Heart left ventricle (tissue), 16 donors: ENCODE measurements at regions of chr9 and their contacts with region 1.

Region 1: DNA sequence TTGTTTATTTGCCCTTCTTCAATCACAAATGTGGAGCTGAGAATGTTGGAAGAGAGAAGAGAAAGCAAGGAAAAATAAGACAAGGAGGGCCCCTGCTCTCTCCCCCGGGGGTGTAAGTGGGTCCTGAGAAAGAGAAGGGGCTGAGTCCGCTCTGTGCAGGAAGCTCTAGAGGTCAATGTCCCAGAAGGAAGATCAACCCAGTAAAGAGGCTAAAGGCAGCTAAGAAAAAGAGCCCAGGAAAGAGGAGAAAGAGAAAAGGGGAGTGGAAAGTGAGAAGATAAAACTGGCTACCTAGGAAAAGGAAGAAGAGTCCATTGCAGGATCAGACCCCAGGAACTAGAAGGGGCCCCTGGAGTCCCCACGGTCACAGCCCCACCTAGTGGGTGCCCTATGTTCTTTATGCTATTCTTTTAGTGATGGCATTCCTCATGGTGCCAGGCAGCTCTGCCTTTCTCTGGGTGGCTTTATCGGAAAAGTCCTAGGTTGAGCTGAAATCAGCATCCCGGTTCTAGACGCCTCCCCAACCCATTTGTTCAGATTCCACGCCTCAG is 583.4 kb downstream of the ACTL7B start:
- DNase-seq: peak; percentile 31 to 65 (median 53)
- ATAC-seq: peak; percentile 75 to 91 (median 84)
- H3K4me3 ChIP-seq: peak overlapping the region in 6 of 12 donors; percentile 6 to 42 (median 36)
- H3K27ac ChIP-seq: peak overlapping the region in 7 of 12 donors; percentile 23 to 72 (median 40)
- H3K4me1 ChIP-seq: peaks cover 0 to 20% (median 0%) of the 10 kb centered on the region in 12 donors
- H3K27me3 ChIP-seq: no peaks in the 10 kb centered on the region
- CTCF ChIP-seq: peak in 11 of 12 donors; percentile 55 to 75 (median 65)
- POLR2A ChIP-seq: no peak

Region 2: GRCh38 chr9:107465467-107466451 is 806.7 kb before region 1 on chr9:
- intact Hi-C with region 1: loop called in 3 of 10 experiments (anchors 5 kb)
- DNase-seq: peak; percentile 65 to 87 (median 72)
- ATAC-seq: peak; percentile 88 to 99 (median 98)
- H3K4me3 ChIP-seq: peak overlapping the region; percentile 38 to 83 (median 70)
- H3K27ac ChIP-seq: peak overlapping the region in 5 of 12 donors; percentile 51 to 69 (median 58)
- H3K4me1 ChIP-seq: peaks cover 0 to 15% (median 4%) of the 10 kb centered on the region in 12 donors
- H3K27me3 ChIP-seq: no peaks in the 10 kb centered on the region
- CTCF ChIP-seq: peak; percentile 84 to 97 (median 90)
- POLR2A ChIP-seq: no peak

Region 3: DNA sequence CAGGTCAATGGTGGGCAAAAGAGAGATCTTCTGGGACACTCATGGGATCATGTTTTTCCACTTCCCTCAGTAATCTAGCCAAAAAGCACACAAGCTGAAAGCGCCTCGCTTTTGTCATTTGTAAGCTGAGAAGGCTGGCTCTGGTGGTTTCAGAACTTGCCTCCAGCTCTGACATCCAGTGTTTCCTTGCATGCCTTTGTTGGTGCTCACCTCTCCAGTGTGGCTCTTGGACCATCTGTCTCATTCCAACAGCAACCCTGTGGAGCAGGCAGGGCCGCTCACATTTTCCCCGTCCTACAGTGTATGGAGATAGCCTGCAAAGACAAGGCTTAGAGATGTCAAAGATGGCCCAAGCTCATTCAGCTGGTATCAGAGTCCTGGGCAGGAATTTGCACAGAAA is 622.1 kb before region 1 on chr9:
- intact Hi-C with region 1: loop called in 1 of 10 experiments (anchors 10 kb)
- DNase-seq: no peak
- ATAC-seq: no peak
- H3K4me3 ChIP-seq: no peak overlapping the region
- H3K27ac ChIP-seq: no peak overlapping the region
- H3K4me1 ChIP-seq: peaks cover 0 to 21% (median 8%) of the 10 kb centered on the region in 12 donors
- H3K27me3 ChIP-seq: no peaks in the 10 kb centered on the region
- CTCF ChIP-seq: no peak
- POLR2A ChIP-seq: no peak

Region 4: DNA sequence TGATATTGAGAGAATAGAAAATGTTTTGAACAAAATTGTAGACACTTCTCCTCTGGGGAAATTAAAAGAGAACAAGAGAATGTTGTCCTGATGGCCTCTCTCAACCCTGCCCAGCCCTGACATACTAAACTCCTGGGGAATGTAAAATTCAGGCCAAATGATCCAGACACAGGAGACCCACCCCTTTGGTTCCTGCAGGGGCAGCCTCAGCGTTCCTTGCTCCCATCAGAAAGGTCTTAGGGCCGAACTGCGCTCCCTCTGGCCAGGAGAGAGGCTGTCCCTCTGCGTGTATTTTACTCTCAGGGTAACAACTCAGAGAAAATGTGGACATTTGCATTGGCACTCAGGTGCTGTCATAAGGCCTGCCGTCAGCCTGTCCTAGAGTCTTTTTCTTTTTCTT is 166.5 kb before region 1 on chr9:
- intact Hi-C with region 1: no loop called
- DNase-seq: no peak
- ATAC-seq: peak in 1 of 4 donors; percentile 64
- H3K4me3 ChIP-seq: no peak overlapping the region
- H3K27ac ChIP-seq: no peak overlapping the region
- H3K4me1 ChIP-seq: no peaks in the 10 kb centered on the region
- H3K27me3 ChIP-seq: no peaks in the 10 kb centered on the region
- CTCF ChIP-seq: no peak
- POLR2A ChIP-seq: no peak

Region 5: GRCh38 chr9:108142504-108143201 is 129.8 kb before region 1 on chr9:
- intact Hi-C with region 1: loop called in 3 of 10 experiments (anchors 5 to 10 kb)
- DNase-seq: peak; percentile 76 to 85 (median 80)
- ATAC-seq: peak; percentile 98 to 99 (median 98)
- H3K4me3 ChIP-seq: no peak overlapping the region
- H3K27ac ChIP-seq: peak overlapping the region; percentile 53 to 91 (median 80)
- H3K4me1 ChIP-seq: peaks cover 0 to 25% (median 16%) of the 10 kb centered on the region in 12 donors
- H3K27me3 ChIP-seq: no peaks in the 10 kb centered on the region
- CTCF ChIP-seq: no peak
- POLR2A ChIP-seq: peak in 1 of 2 donors; percentile 5

Region 6: GRCh38 chr9:108217431-108218349 is 54.7 kb before region 1 on chr9:
- intact Hi-C with region 1: no loop called
- DNase-seq: no peak
- ATAC-seq: no peak
- H3K4me3 ChIP-seq: no peak overlapping the region
- H3K27ac ChIP-seq: no peak overlapping the region
- H3K4me1 ChIP-seq: no peaks in the 10 kb centered on the region
- H3K27me3 ChIP-seq: no peaks in the 10 kb centered on the region
- CTCF ChIP-seq: no peak
- POLR2A ChIP-seq: no peak

Region 7: GRCh38 chr9:108535526-108535925 is 263.1 kb after region 1 on chr9:
- intact Hi-C with region 1: loop called in 1 of 10 experiments (anchors 10 kb)
- DNase-seq: no peak
- ATAC-seq: peak in 1 of 4 donors; percentile 18
- H3K4me3 ChIP-seq: no peak overlapping the region
- H3K27ac ChIP-seq: no peak overlapping the region
- H3K4me1 ChIP-seq: no peaks in the 10 kb centered on the region
- H3K27me3 ChIP-seq: no peaks in the 10 kb centered on the region
- CTCF ChIP-seq: peak; percentile 17 to 49 (median 36)
- POLR2A ChIP-seq: no peak

Region 8: GRCh38 chr9:108565651-108566378 is 293.4 kb after region 1 on chr9:
- intact Hi-C with region 1: loop called in 2 of 10 experiments (anchors 10 kb)
- DNase-seq: peak in 3 of 5 donors; percentile 29 to 60 (median 48)
- ATAC-seq: peak; percentile 93 to 95 (median 94)
- H3K4me3 ChIP-seq: no peak overlapping the region
- H3K27ac ChIP-seq: no peak overlapping the region
- H3K4me1 ChIP-seq: peaks cover 0 to 3% (median 0%) of the 10 kb centered on the region in 12 donors
- H3K27me3 ChIP-seq: no peaks in the 10 kb centered on the region
- CTCF ChIP-seq: peak; percentile 64 to 90 (median 85)
- POLR2A ChIP-seq: no peak